ENCODE measurements at regions of chr16 and their contacts with region 1.

Region 1: DNA sequence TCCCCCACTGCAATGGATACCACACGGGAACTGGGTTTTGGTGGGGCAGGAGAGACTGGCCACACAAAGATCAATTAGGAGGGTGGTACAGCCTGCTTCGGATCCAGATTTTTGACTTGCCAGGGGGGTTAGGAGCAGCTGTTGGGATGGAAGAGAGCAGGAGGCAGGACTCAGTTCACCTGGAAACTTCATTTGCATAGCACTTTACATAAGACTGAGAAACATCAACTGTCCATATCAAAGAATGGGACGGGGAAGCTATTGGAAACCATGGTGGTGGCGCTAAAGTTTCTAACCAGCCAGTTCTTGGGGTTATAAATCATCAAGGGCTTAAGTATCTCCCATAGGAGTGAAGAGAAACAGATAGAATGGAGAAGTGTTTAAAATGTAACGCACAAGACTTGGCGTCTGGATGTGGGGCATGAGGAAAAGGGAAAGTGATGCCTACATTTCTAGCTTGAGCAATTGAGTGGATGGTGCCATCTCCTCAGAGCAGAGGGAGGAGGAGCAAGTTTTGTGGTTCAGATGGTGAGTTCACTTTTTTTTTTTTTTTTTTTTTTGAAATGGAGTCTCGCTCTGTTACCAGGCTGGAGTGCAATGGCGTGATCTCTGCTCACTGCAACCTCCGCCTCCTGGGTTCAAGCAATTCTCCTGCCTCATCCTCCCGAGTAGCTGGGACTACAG is 6.4 kb upstream of the SRCAP start:
- DNase-seq: no peak
- H3K4me3 Mint-ChIP-seq: no peak overlapping the region
- H3K27ac Mint-ChIP-seq: peak overlapping the region; percentile 38
- H3K4me1 Mint-ChIP-seq: peaks cover 15% of the 10 kb centered on the region
- H3K27me3 Mint-ChIP-seq: no peaks in the 10 kb centered on the region

Region 2: DNA sequence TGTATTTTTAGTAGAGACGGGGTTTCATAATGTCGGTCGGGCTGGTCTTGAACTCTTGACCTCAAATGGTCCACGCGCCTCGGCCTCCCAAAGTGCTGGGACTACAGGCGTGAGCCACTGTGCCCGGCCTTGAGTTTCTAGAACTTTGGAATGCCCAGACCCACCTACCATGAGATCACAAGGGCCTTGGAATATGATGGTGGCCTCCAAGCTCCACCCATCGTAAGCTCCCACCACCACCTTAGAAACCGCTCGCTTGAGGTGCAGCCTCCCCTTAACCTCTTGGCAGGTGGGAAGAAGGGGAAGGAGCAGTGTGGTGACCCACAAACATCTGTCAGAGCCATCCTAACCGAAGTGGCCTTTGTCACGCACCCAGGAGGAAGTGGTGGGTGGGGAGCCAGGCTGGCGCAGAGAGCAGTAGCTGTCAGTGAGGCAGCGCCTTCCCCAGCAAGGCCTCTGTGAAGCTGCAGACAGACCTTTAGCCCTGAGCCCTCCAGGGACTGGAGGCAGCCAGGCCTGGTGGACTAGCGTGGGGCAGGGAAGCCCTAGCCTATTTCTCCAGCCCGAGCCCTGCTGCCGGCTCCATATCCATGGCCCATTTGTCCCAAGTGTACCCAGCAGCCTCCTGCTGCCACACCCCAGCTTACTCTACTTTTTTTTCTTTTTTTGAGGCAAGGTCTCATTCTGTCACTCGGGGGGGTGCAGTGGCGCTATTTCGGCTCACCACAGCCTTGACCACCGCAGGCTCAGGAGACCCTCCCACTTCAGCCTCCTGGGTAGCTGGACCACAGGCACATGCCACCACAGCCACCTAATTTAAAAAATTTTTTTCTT is 233.7 kb before region 1 on chr16:
- CTCF ChIA-PET with region 1: no interaction called
- POLR2A ChIA-PET with region 1: no interaction called
- intact Hi-C with region 1: no loop called
- DNase-seq: peak; percentile 97
- H3K4me3 Mint-ChIP-seq: peak overlapping the region; percentile 63
- H3K27ac Mint-ChIP-seq: peak overlapping the region; percentile 96
- H3K4me1 Mint-ChIP-seq: peaks cover 43% of the 10 kb centered on the region
- H3K27me3 Mint-ChIP-seq: no peaks in the 10 kb centered on the region

Region 3: DNA sequence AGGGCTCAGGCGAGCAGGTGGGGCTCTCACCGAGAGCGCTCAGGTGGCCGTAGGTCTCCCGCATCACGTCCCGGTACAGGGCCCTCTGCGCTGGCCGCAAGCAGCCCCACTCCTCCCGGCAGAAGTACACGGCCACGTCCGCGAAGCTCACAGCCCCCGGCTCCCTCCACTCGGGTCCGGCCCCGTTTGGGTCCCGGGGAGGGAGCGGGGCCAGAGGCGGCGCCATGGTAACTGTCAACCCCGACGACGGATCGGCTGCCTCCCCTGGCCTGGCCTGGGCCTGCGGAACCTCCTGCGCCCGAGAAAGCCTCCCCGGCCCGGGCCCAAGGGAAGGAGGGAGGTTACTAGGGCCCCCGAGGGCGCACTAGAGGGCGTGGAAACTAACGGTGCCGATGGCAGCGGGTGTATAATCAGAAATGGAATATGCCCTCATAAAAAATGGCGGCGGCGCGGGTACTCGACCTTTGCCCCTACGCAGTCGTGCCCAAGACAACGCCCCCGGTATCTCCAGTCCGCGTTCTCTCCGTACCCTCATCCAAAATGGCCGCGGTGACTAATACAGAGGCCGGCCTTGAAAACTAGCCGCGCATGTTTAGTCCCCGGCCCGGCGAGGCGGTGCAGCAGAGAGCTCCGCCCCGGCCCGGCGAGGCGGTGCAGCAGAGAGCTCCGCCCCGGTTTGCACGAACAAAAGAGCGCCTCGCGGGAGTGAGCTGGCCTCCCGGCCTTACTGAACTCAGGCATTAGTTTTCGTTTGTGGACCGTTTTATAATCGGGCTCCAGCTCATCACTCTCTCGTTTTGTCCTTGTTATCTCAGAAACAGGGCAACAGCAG is 134.3 kb before region 1 on chr16 and contains the start of gene ZNF764:
- CTCF ChIA-PET with region 1: no interaction called
- POLR2A ChIA-PET with region 1: no interaction called
- intact Hi-C with region 1: no loop called
- DNase-seq: peak; percentile 99
- H3K4me3 Mint-ChIP-seq: peak within 1 kb of the TSS; percentile 89
- H3K27ac Mint-ChIP-seq: peak within 1 kb of the TSS; percentile 96
- H3K4me1 Mint-ChIP-seq: peaks cover 38% of the 10 kb centered on the region
- H3K27me3 Mint-ChIP-seq: no peaks in the 10 kb centered on the region
- total RNA-seq, gene ZNF764: 13.7 to 14.2 TPM

Region 4: GRCh38 chr16:30585022-30585399 is 107.5 kb before region 1 on chr16:
- CTCF ChIA-PET with region 1: no interaction called
- POLR2A ChIA-PET with region 1: no interaction called
- intact Hi-C with region 1: no loop called
- DNase-seq: peak; percentile 36
- H3K4me3 Mint-ChIP-seq: peak overlapping the region; percentile 83
- H3K27ac Mint-ChIP-seq: peak overlapping the region; percentile 83
- H3K4me1 Mint-ChIP-seq: peaks cover 32% of the 10 kb centered on the region
- H3K27me3 Mint-ChIP-seq: no peaks in the 10 kb centered on the region

Region 5: DNA sequence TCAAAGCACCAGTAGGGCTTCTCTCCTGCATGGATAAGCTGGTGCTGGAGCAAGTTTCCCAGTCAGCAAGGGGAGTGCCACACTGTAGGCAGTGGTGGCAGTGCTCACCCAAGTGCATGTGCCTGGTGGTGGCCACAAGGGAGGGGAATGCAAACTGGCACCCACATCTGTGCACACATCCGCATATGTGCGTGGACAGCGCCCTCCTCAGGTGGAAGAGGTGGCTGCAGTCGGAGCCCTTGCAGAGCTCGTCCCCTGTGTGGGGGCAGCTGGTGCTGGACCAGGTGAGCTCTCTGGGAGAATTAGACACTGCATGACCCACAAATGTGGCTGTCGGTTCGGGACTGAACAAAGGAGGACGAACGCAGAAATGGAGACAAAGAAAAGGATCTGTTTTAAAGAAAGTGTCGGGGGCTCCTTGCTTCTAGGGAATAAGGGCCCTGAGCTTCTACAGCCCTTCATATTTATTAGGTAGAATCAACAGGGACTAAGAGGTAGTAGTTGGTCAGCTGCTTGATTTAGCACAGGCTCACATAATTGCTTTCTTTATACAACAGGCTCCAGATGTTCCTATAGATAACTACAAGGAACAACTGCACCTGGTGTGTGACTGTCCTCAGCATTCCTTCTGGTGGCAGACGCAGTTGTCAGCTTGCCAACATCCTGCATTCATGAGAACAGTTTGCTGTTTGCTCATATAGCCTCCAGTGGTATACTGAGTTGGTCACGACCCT is 77.0 kb before region 1 on chr16:
- CTCF ChIA-PET with region 1: interaction called, 15 read pairs
- POLR2A ChIA-PET with region 1: no interaction called
- intact Hi-C with region 1: no loop called
- DNase-seq: peak; percentile 91
- H3K4me3 Mint-ChIP-seq: no peak overlapping the region
- H3K27ac Mint-ChIP-seq: no peak overlapping the region
- H3K4me1 Mint-ChIP-seq: peaks cover 1% of the 10 kb centered on the region
- H3K27me3 Mint-ChIP-seq: no peaks in the 10 kb centered on the region

Region 6: DNA sequence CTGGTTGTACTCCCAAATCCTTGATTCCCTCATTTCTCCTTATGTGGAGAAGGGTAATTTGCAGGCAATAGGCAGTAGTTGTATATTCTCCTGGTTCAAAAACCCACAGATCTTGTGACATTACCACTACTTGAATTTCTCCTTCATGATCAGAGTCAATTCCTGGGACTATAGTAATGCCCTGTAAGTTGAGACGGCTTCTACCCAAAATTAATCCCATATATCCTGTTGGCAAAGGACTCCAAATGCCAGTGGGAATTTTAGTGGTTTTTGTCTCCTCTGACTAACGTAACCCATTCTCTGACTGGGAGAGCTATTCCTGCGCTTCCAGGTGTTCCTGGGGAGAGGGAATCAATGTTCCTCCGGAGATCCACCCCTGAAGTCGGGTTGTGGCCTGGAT is 70.8 kb before region 1 on chr16:
- CTCF ChIA-PET with region 1: interaction called, 10 read pairs
- POLR2A ChIA-PET with region 1: no interaction called
- intact Hi-C with region 1: no loop called
- DNase-seq: no peak
- H3K4me3 Mint-ChIP-seq: no peak overlapping the region
- H3K27ac Mint-ChIP-seq: no peak overlapping the region
- H3K4me1 Mint-ChIP-seq: no peaks in the 10 kb centered on the region
- H3K27me3 Mint-ChIP-seq: peaks cover 3% of the 10 kb centered on the region

Region 7: GRCh38 chr16:30628627-30629540 is 63.6 kb before region 1 on chr16:
- CTCF ChIA-PET with region 1: interaction called, 16 read pairs
- POLR2A ChIA-PET with region 1: interaction called, 3 read pairs
- intact Hi-C with region 1: no loop called
- DNase-seq: peak; percentile 94
- H3K4me3 Mint-ChIP-seq: peak overlapping the region; percentile 60
- H3K27ac Mint-ChIP-seq: peak overlapping the region; percentile 57
- H3K4me1 Mint-ChIP-seq: peaks cover 4% of the 10 kb centered on the region
- H3K27me3 Mint-ChIP-seq: no peaks in the 10 kb centered on the region

Region 8: GRCh38 chr16:30636599-30636998 is 55.9 kb before region 1 on chr16:
- CTCF ChIA-PET with region 1: interaction called, 13 read pairs
- POLR2A ChIA-PET with region 1: interaction called, 3 read pairs
- intact Hi-C with region 1: no loop called
- DNase-seq: no peak
- H3K4me3 Mint-ChIP-seq: no peak overlapping the region
- H3K27ac Mint-ChIP-seq: no peak overlapping the region
- H3K4me1 Mint-ChIP-seq: peaks cover 9% of the 10 kb centered on the region
- H3K27me3 Mint-ChIP-seq: no peaks in the 10 kb centered on the region

Region 9: DNA sequence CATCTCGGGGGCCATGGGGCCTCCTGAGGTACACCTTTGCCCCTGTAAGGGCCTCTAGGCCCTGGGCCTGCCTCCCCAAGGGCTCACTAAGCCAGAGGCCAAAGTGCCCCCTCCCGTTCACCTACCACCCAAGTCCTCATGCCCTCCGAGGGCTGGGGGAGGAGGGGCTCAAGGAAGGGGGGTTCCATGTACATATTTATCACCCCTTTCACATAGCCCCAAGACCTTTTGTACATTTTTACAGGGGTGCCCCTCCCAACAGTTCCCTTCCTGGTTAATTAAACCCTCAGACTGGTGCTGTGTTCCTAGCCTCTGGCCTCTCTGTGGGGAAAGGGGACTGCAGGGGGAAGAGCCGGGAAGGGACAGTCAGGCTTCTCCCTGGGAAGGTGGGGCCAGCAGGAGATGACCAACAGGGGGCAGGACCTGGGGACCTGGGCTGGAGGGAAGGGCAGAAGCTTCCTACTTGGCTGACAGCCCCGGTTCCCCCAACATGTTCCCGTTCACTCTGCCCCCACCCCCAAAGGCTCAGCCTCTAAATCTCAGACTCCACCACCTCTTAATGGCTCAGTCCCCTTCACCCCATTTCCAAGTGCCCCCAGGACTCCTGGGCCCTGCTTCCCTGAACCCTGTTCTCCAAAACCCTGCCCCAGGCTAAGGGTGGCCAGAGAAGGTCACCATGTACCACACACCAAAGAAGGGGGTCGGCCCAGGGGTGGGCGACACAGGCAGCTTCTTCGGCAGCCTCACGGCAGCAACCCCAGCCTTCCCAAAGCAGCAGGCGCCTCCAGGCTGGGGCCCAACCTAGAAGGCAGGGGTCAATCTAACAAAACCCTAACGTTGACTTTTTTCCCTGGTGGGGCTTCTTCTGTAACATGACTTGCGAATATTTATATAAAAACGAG is 22.4 kb before region 1 on chr16:
- CTCF ChIA-PET with region 1: interaction called, 15 read pairs
- POLR2A ChIA-PET with region 1: interaction called, 4 read pairs
- intact Hi-C with region 1: no loop called
- DNase-seq: no peak
- H3K4me3 Mint-ChIP-seq: no peak overlapping the region
- H3K27ac Mint-ChIP-seq: no peak overlapping the region
- H3K4me1 Mint-ChIP-seq: no peaks in the 10 kb centered on the region
- H3K27me3 Mint-ChIP-seq: no peaks in the 10 kb centered on the region